CD4-positive, alpha-beta memory T cell (primary cell): ENCODE measurements at regions of chr17 and their contacts with region 1.

Region 1: DNA sequence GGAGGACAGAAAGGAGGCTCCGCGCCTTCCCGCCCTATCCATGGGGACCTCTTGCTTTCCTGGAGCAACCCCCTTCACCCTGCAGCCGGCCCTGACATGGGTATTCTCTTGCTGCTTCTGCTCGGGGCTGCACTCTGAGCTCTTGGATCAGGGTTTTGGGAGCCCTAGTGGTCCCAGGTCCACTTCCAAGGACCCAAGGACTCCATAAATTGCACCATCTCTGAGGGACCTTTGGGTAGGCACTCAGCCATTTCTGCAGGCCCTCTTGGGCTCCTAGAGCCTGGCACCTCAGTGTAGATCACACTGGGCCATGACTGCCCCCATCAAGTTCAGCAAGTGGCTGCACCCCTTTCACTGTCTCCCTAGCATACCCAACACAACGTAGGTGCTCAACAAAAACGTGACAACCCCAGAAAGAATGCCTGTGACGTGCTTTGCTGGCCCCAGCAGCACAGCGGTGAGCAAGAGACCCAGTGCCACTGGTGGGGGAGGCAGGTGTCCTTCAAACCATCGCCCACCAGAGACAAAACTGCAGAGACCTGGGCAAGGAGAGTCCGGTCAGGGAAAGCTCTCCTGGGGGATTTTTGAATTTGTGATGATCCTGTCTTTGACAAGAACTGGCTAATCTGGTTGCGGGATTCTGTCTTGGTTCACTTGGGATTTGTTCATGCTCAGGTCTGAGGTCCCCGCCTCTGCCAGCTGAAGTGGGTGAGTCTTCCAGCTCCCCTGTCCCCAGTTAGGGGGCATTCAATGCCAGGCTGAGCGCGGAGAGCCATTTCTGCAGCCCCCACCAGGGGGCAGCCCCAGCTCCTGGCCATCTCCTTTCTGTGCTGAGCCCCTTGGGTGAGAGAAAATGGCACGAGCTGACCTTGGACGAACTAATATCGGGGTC is 2.5 kb upstream of the RAB11FIP4 start:
- DNase-seq: peak in 4 of 5 donors; percentile 21 to 40 (median 32)
- H3K4me3 ChIP-seq: no peak overlapping the region
- H3K4me3 Mint-ChIP-seq: no peak overlapping the region
- H3K27ac ChIP-seq: no peak overlapping the region
- H3K27ac Mint-ChIP-seq: no peak overlapping the region
- H3K4me1 ChIP-seq: peaks cover 9% of the 10 kb centered on the region
- H3K4me1 Mint-ChIP-seq: peaks cover 2 to 23% (median 5%) of the 10 kb centered on the region in 4 donors
- H3K27me3 ChIP-seq: peaks cover 8% of the 10 kb centered on the region
- H3K27me3 Mint-ChIP-seq: peaks cover 15 to 23% of the 10 kb centered on the region in 2 donors

Region 2: GRCh38 chr17:31226373-31226772 is 162.6 kb before region 1 on chr17:
- CTCF ChIA-PET with region 1: no interaction called
- POLR2A ChIA-PET with region 1: no interaction called
- intact Hi-C with region 1: no loop called
- DNase-seq: no peak
- H3K4me3 ChIP-seq: no peak overlapping the region
- H3K4me3 Mint-ChIP-seq: no peak overlapping the region
- H3K27ac ChIP-seq: no peak overlapping the region
- H3K27ac Mint-ChIP-seq: no peak overlapping the region
- H3K4me1 ChIP-seq: no peaks in the 10 kb centered on the region
- H3K4me1 Mint-ChIP-seq: peaks cover 0 to 7% (median 2%) of the 10 kb centered on the region in 4 donors
- H3K27me3 ChIP-seq: no peaks in the 10 kb centered on the region
- H3K27me3 Mint-ChIP-seq: no peaks in the 10 kb centered on the region

Region 3: GRCh38 chr17:31508288-31509094 is 119.5 kb after region 1 on chr17:
- CTCF ChIA-PET with region 1: interaction called, 3 read pairs
- POLR2A ChIA-PET with region 1: no interaction called
- intact Hi-C with region 1: loop called (anchors 5 kb)
- DNase-seq: peak; percentile 80 to 91 (median 85)
- H3K4me3 ChIP-seq: peak overlapping the region; percentile 42 to 72
- H3K4me3 Mint-ChIP-seq: peak overlapping the region; percentile 87 to 98 (median 94)
- H3K27ac ChIP-seq: peak overlapping the region; percentile 72
- H3K27ac Mint-ChIP-seq: peak overlapping the region; percentile 95 to 99 (median 98)
- H3K4me1 ChIP-seq: peaks cover 58% of the 10 kb centered on the region
- H3K4me1 Mint-ChIP-seq: peaks cover 39 to 73% (median 54%) of the 10 kb centered on the region in 4 donors
- H3K27me3 ChIP-seq: no peaks in the 10 kb centered on the region
- H3K27me3 Mint-ChIP-seq: no peaks in the 10 kb centered on the region

Region 4: GRCh38 chr17:31517524-31517923 is 128.5 kb after region 1 on chr17:
- CTCF ChIA-PET with region 1: interaction called, 47 read pairs
- POLR2A ChIA-PET with region 1: no interaction called
- intact Hi-C with region 1: no loop called
- DNase-seq: no peak
- H3K4me3 ChIP-seq: no peak overlapping the region
- H3K4me3 Mint-ChIP-seq: peak overlapping the region in 1 of 8 donors; percentile 20
- H3K27ac ChIP-seq: no peak overlapping the region
- H3K27ac Mint-ChIP-seq: peak overlapping the region in 1 of 7 donors; percentile 79
- H3K4me1 ChIP-seq: no peaks in the 10 kb centered on the region
- H3K4me1 Mint-ChIP-seq: peaks cover 6 to 27% (median 16%) of the 10 kb centered on the region in 4 donors
- H3K27me3 ChIP-seq: no peaks in the 10 kb centered on the region
- H3K27me3 Mint-ChIP-seq: no peaks in the 10 kb centered on the region